BJ (cell line): ENCODE measurements at regions of chr1 and their contacts with region 1.

Region 1: DNA sequence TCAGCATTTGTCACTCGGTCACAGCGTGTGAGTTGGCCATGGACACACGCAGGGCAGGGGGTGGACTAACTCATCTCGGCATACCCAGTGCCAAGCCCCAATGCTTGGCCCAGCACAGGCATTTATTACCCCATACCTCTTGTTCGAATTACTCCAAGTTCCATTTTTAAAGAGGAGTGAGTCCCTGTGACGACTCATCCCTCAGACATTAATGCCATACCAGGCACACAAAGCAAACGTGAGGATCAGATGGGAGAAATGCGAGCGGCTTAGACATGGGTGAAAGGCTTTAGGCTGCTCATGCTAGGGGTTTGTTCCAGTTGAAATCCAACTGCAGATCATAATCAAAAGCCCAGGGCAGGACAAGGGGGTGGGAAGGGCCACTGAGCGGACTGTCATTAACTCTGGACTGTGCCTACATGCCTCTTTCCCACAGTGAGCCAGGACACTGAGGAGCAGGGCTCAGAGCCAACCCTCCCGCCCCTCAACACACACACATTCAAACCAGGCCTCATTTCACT is 118.5 kb upstream of the NGF start:
- DNase-seq: peak; percentile 30
- H3K4me3 ChIP-seq: no peak overlapping the region
- H3K27me3 ChIP-seq: no peaks in the 10 kb centered on the region
- CTCF ChIP-seq: no peak

Region 2: DNA sequence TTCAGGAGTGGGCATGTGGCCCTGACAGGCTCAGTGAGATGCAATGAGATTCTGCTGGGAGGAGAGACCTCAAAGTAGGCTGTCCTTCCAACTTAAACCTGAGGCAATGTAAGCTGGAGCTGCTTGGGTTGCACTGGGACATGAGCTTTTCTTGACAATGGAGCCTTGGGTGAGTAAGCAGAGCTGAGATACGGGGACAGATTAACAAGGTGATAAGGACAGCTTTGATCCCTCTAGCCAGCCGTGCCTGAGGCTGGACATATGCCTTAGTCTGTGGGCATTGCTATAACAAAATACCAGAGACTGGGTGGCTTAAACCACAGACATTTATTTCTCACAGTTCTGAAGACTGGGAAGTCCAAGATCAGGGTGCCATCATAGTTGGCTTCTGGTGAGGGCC is 100.1 kb before region 1 on chr1:
- CTCF ChIA-PET with region 1: no interaction called
- POLR2A ChIA-PET with region 1: no interaction called
- DNase-seq: no peak
- H3K4me3 ChIP-seq: no peak overlapping the region
- H3K27me3 ChIP-seq: no peaks in the 10 kb centered on the region
- CTCF ChIP-seq: no peak

Region 3: DNA sequence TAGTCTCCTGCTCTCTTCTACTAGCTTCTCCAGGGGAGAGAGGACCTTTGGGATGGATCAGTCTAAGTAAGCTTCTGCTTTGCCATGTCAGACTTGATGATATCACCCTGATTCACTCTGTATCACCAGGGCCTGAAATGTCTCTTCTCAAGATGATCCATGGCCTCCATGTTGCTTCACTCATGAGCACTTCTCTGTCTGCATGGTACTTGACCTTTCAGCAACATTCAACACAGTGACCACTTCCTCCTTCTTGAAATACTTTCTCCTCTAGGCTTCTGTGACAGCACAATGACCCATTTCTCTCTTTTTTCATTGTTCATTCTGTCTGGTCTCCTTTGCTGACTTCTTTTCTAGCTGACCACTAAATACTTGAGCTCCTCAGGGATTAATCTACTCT is 83.2 kb before region 1 on chr1:
- CTCF ChIA-PET with region 1: no interaction called
- POLR2A ChIA-PET with region 1: interaction called, 11 read pairs
- DNase-seq: peak; percentile 78
- H3K4me3 ChIP-seq: no peak overlapping the region
- H3K27me3 ChIP-seq: no peaks in the 10 kb centered on the region
- CTCF ChIP-seq: no peak

Region 4: DNA sequence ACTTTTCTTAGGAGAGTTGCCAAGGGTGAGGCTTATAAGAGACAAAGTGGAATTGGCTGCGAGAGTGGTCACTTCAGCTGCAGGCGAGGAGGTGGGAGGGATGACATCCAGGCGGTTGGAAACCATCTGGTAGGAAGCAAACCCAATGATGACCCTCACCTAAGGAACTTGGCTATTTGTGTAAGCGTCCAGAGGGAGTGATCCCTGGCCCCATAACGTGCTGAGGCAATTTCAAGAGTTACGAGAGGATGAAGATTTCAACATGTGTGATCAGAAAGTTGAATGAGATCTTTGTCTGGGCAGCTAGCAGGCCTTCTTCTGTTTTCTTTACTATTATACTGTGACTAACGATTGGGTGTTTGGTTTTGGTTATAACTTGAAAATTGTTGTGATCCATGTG is 82.6 kb after region 1 on chr1:
- CTCF ChIA-PET with region 1: no interaction called
- POLR2A ChIA-PET with region 1: no interaction called
- DNase-seq: no peak
- H3K4me3 ChIP-seq: no peak overlapping the region
- H3K27me3 ChIP-seq: no peaks in the 10 kb centered on the region
- CTCF ChIP-seq: no peak

Region 5: DNA sequence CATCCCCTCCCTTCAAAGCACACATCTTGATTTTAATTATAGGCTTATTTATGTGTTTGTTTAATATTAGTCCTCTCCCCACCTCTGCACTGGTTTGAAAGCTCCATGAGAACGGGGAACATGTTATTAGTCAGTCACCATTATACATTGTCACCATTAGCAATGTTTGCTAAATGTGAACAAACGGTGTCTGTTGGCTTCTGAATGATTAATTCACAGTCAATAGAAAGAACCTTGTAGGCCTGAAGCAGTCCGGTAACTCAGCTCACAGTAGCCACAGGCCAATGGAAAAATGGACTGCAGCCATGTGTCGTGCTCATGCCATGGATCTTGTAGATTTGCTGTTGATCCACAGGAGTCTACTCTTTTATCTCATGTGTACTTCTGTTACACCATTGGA is 434.1 kb after region 1 on chr1:
- CTCF ChIA-PET with region 1: no interaction called
- POLR2A ChIA-PET with region 1: no interaction called
- DNase-seq: no peak
- H3K4me3 ChIP-seq: no peak overlapping the region
- H3K27me3 ChIP-seq: no peaks in the 10 kb centered on the region
- CTCF ChIP-seq: no peak